A673 (cell line): ENCODE measurements at regions of chr19 and their contacts with region 1.

Region 1: DNA sequence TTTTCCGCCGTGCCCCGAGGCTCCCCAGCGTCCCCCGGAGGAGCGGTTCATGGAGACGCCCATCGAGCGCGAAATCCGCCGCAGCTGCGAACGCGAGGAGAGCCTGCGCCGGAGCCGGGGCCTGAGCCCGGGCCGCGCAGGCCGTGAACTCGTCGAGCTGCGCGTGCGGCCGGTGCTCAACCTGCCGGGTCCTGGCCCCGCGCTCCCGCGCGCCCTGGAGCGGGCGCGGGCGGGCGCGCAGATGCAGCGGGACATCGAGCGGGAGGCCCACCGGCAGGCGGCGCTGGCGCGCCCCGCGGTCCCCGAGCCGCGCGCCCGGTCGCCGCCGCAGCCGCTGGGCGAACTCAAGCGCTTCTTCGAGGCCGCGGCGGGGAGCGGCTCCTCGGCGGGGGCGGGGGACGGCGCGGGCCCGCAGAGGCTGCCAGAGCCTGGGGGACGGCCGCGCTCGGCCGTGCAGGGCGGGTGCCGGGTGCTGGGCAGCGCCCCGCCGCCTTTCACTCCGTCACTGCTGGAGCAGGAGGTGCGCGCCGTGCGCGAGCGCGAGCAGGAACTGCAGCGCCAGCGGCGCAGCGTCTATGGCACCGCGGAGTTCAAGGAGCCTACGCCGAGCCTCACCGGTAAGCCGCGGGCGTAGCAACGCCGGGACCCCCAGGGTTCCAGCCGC is 807 bp downstream of the MISP3 start:
- DNase-seq: peak; percentile 84
- H3K4me3 ChIP-seq: peak overlapping the region; percentile 49
- H3K27ac ChIP-seq: no peak overlapping the region
- H3K4me1 ChIP-seq: peaks cover 24% of the 10 kb centered on the region
- H3K27me3 ChIP-seq: no peaks in the 10 kb centered on the region
- CTCF ChIP-seq: peak; percentile 18; the same call in 1 of the 2 replicates

Region 2: GRCh38 chr19:13597640-13598039 is 475.8 kb before region 1 on chr19:
- CTCF ChIA-PET with region 1: no interaction called
- POLR2A ChIA-PET with region 1: no interaction called
- intact Hi-C with region 1: loop called (anchors 5 kb)
- DNase-seq: peak; percentile 82
- H3K4me3 ChIP-seq: no peak overlapping the region
- H3K27ac ChIP-seq: no peak overlapping the region
- H3K4me1 ChIP-seq: peaks cover 5% of the 10 kb centered on the region
- H3K27me3 ChIP-seq: no peaks in the 10 kb centered on the region
- CTCF ChIP-seq: peak; percentile 68

Region 3: DNA sequence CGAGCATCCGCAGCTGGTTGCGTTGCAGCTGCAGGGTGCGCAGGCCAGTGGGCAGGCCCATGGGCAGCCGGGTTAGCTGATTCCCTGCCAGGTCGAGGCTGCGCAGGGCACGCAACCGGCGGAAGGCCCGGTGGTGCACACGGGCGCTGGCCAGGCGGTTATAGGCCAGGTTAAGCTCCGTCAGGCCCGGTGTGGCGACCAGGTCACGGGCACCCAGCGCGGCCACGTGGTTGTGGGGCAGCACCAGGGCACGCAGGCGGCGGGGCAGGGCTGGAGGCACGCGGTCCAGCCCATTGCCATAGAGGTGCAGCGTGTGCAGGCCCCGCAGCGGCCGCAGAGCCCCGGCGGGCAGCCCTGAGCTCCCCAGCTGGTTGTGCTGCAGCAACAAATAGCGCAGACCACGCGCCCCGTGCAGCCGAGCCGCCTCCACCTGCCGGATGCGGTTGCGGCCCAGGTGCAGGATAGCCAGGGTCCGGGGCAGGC is 140.4 kb before region 1 on chr19:
- CTCF ChIA-PET with region 1: no interaction called
- POLR2A ChIA-PET with region 1: no interaction called
- intact Hi-C with region 1: no loop called
- DNase-seq: no peak
- H3K4me3 ChIP-seq: no peak overlapping the region
- H3K27ac ChIP-seq: no peak overlapping the region
- H3K4me1 ChIP-seq: no peaks in the 10 kb centered on the region
- H3K27me3 ChIP-seq: no peaks in the 10 kb centered on the region
- CTCF ChIP-seq: no peak

Region 4: DNA sequence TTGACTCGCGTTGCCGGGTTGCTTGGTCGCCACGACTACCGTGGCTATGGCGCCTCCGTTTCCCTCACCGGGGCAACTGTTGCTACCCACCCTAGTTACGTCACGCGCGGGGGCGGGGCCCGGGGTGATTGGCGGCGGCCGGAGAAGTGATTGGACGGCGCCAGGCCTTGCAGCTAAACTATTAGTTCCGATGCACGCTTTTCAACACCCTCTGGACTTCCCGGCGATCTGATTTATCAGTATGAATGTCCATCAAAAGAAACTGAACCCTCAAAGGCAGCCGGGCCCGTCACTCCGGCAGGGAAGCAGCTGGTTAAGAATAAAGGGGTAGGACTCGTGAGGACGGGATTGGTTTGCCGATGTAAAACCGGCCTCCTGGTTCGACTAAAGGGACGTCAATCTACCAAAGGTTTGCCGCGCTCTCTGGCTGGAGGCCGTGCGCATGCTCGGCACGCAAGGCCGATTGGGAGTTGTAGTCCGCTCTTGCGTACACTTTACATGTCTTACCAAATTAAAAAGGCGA is 67.1 kb before region 1 on chr19 and contains the start of gene RFX1:
- CTCF ChIA-PET with region 1: no interaction called
- POLR2A ChIA-PET with region 1: no interaction called
- intact Hi-C with region 1: loop called (anchors 5 kb)
- DNase-seq: peak; percentile 99
- H3K4me3 ChIP-seq: peak within 1 kb of the TSS; percentile 91
- H3K27ac ChIP-seq: peak within 1 kb of the TSS; percentile 99
- H3K4me1 ChIP-seq: peaks cover 11% of the 10 kb centered on the region
- H3K27me3 ChIP-seq: no peaks in the 10 kb centered on the region
- CTCF ChIP-seq: no peak
- total RNA-seq, gene RFX1: 19.5 and 23.1 TPM in 2 replicates

Region 5: DNA sequence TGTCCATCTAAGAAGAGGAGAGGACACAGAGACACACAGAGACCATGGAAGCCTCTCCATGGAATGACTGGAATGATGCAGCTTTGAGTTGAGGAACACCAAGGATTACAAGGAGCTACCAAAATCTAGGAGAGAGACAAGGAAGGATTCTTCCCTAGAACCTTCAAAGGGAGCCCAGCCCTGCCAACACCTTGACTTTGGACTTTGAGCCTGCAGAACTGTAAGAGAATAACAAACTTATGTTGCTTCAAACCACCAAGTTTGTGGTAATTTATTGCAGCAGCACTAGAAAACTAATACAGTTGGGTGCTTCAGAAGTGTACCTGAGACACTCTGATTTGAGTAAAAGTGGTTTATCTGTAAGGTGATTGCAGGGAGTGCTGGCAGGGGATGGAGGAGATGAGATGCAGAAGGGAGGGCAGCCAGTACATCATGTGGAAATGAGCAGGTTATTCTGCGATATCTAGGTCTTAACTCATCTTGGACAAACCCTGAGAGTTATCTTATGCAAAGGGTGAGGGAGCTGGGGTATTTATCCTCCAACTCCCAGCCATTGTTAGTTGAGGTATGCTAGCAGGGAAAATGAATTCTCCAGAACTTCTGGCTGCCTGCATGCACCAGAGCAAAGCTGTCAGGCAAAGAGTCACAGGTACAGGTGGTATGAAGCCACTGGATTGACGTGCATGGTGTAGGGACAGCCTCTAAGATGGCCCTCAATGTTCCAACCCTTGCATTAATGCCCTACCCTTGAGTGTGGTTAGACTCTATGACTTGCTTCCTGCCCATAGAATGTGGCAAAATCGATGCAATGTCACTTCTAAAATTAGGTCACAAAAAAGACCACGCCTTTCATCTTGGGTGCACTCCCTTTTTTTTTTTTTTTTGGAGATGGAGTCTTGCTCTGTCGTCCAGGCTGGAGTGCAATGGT is 163.9 kb after region 1 on chr19:
- CTCF ChIA-PET with region 1: no interaction called
- POLR2A ChIA-PET with region 1: no interaction called
- intact Hi-C with region 1: no loop called
- DNase-seq: no peak
- H3K4me3 ChIP-seq: no peak overlapping the region
- H3K27ac ChIP-seq: no peak overlapping the region
- H3K4me1 ChIP-seq: no peaks in the 10 kb centered on the region
- H3K27me3 ChIP-seq: no peaks in the 10 kb centered on the region
- CTCF ChIP-seq: no peak